ENCODE measurements at regions of chr1 and their contacts with region 1.

Region 1: DNA sequence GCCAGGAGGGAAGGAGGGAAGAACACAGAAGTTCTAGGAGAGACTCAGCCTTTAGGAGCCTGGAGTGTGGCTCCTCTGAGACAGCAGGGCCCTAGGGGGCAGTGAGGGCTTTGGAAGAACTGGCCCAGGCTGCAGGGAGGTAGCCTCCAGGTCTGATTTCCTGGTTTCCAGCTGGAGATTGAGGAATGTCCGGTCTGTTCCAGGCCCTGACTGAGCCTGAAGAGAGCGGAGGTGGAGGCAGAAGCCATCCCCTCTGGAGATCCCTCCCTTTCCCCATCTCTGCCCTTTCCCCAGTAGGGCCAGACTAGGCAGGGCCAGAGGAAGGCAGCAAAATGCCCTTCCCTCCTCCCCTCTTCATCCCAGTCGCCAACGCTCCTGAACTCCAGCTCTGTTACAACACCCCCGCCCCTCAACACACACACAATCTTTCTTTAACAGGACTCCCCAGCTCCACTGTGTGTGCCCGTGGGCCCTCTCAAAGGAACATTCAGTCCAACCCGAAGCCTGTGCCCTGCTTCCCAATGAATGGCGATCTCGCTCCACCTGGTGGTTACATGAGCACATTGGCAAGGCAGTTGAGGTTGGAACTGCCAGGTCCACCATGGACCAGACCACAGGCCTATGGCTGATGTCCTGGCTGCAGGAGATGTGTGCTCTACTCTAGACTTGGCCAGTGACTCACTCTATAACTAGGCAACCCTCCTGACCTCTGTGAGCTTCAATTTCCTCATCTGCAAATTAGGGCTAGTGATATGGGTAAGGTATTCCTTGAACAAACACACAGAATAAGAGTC is 32.0 kb downstream of the MAP7D1 start:
- DNase-seq: peak; percentile 80 to 87 (median 83)
- H3K4me3 ChIP-seq: no peak overlapping the region
- H3K4me3 Mint-ChIP-seq: no peak overlapping the region
- H3K27ac ChIP-seq: no peak overlapping the region
- H3K27ac Mint-ChIP-seq: peak overlapping the region; percentile 52 to 92 (median 87)
- H3K4me1 ChIP-seq: peaks cover 5% of the 10 kb centered on the region
- H3K4me1 Mint-ChIP-seq: peaks cover 8 to 11% (median 10%) of the 10 kb centered on the region in 4 donors
- H3K27me3 ChIP-seq: no peaks in the 10 kb centered on the region
- H3K27me3 Mint-ChIP-seq: no peaks in the 10 kb centered on the region

Region 2: DNA sequence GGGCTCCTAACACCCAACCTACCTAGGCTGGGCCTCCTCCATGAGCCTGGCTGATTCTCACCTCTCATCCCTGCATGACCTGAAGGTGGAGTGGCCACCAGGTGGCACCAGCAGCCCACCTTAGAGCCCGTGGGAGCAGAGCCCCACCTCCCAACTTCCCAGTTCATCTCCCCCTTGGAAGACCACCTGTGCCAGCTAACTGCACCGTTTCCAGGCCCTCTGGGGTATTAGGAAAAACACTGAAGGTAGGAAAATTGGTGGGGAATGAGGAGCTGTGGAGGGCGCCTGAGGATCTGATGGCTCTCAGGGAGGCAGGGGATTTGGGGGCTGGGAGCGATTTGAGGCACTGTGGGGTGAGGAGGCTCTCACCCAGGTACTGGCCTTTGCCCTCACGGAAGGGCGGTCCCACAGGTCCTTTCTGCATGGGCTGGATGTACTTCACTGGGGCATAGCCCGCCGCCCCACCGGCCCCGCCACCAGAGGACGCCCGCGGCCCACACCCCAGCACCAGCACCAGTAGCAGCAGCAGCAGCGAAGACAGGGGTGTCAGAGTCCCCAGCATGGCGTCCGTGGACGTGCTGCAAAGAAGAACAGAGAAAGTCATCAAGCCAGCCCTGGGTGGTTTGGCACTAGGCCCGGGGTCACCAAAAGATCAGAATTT is 88.2 kb before region 1 on chr1:
- CTCF ChIA-PET with region 1: interaction called, 33 read pairs
- POLR2A ChIA-PET with region 1: no interaction called
- intact Hi-C with region 1: loop called (anchors 1 kb)
- DNase-seq: peak; percentile 62 to 71 (median 70)
- H3K4me3 ChIP-seq: no peak overlapping the region
- H3K4me3 Mint-ChIP-seq: peak overlapping the region in 2 of 8 donors; percentile 26 to 39
- H3K27ac ChIP-seq: no peak overlapping the region
- H3K27ac Mint-ChIP-seq: peak overlapping the region in 1 of 7 donors; percentile 50
- H3K4me1 ChIP-seq: no peaks in the 10 kb centered on the region
- H3K4me1 Mint-ChIP-seq: peaks cover 0 to 4% (median under 1%) of the 10 kb centered on the region in 4 donors
- H3K27me3 ChIP-seq: no peaks in the 10 kb centered on the region
- H3K27me3 Mint-ChIP-seq: no peaks in the 10 kb centered on the region

Region 3: GRCh38 chr1:36160949-36161485 is 27.0 kb before region 1 on chr1:
- CTCF ChIA-PET with region 1: interaction called, 348 read pairs
- POLR2A ChIA-PET with region 1: interaction called, 244 read pairs
- intact Hi-C with region 1: no loop called
- DNase-seq: peak; percentile 57 to 72 (median 67)
- H3K4me3 ChIP-seq: peak overlapping the region; percentile 53 to 62
- H3K4me3 Mint-ChIP-seq: peak overlapping the region; percentile 80 to 91 (median 86)
- H3K27ac ChIP-seq: peak overlapping the region; percentile 78
- H3K27ac Mint-ChIP-seq: peak overlapping the region; percentile 93 to 99 (median 98)
- H3K4me1 ChIP-seq: peaks cover 75% of the 10 kb centered on the region
- H3K4me1 Mint-ChIP-seq: peaks cover 53 to 83% (median 66%) of the 10 kb centered on the region in 4 donors
- H3K27me3 ChIP-seq: no peaks in the 10 kb centered on the region
- H3K27me3 Mint-ChIP-seq: no peaks in the 10 kb centered on the region

Region 4: DNA sequence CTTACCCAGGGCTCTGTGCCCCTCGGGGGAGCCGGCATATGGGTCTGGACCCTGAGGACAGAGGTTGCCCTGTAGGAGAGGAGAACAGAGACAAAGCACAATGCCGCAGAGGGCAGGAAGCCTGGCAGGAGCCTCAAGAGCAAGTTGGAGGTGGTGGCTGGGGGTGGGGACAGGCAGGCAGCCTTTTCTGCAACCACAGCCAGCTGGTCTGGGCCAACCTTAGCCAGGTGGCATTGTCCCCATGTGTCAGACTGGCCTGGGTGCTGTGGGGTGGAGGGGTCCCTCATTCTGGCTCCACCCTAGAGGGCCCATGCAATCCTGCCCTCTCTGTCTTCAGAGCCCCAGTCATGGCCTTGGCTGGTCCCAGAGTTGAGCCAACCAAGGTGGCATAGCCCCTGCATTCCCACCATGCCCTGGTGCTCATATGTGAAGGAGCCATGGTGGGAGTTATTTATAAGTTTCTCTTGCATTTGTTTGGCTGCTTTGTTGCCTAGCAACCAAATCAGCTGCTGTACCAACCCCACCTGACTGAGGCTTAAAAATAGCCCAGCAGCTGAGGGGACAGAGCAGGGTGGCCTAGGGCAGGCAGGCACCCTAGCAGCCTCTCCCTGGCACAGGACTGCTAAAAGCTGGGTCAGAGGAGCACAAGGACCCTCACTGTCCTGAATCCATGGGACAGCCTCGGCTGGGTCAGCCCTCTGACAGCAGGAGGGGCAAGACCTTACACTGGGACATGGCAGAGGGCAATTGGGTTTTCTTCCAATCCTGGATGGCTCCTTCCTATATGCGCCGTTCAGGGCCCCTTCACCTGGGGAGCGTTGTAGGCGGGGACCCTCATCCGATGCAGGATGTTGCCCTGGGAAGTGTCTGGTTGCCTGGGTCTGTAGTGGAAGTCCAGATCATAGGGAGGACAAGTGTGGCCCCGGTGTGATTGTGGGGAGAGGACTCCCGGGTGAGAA is 12.6 kb before region 1 on chr1:
- CTCF ChIA-PET with region 1: interaction called, 26 read pairs
- POLR2A ChIA-PET with region 1: interaction called, 10 read pairs
- intact Hi-C with region 1: no loop called
- DNase-seq: no peak
- H3K4me3 ChIP-seq: no peak overlapping the region
- H3K4me3 Mint-ChIP-seq: no peak overlapping the region
- H3K27ac ChIP-seq: peak overlapping the region; percentile 30
- H3K27ac Mint-ChIP-seq: peak overlapping the region in 4 of 7 donors; percentile 22 to 81 (median 42)
- H3K4me1 ChIP-seq: no peaks in the 10 kb centered on the region
- H3K4me1 Mint-ChIP-seq: peaks cover 7 to 13% (median 8%) of the 10 kb centered on the region in 4 donors
- H3K27me3 ChIP-seq: no peaks in the 10 kb centered on the region
- H3K27me3 Mint-ChIP-seq: no peaks in the 10 kb centered on the region

Region 5: GRCh38 chr1:36285448-36286101 is 97.6 kb after region 1 on chr1:
- CTCF ChIA-PET with region 1: interaction called, 49 read pairs
- POLR2A ChIA-PET with region 1: interaction called, 6 read pairs
- intact Hi-C with region 1: loop called (anchors 1 kb)
- DNase-seq: peak; percentile 72 to 81 (median 75)
- H3K4me3 ChIP-seq: no peak overlapping the region
- H3K4me3 Mint-ChIP-seq: peak overlapping the region in 5 of 8 donors; percentile 5 to 41 (median 13)
- H3K27ac ChIP-seq: no peak overlapping the region
- H3K27ac Mint-ChIP-seq: peak overlapping the region; percentile 24 to 89 (median 76)
- H3K4me1 ChIP-seq: peaks cover 13% of the 10 kb centered on the region
- H3K4me1 Mint-ChIP-seq: peaks cover 8 to 29% (median 15%) of the 10 kb centered on the region in 4 donors
- H3K27me3 ChIP-seq: no peaks in the 10 kb centered on the region
- H3K27me3 Mint-ChIP-seq: no peaks in the 10 kb centered on the region